H1 (cell line): ENCODE measurements at regions of chr15 and their contacts with region 1.

Region 1: DNA sequence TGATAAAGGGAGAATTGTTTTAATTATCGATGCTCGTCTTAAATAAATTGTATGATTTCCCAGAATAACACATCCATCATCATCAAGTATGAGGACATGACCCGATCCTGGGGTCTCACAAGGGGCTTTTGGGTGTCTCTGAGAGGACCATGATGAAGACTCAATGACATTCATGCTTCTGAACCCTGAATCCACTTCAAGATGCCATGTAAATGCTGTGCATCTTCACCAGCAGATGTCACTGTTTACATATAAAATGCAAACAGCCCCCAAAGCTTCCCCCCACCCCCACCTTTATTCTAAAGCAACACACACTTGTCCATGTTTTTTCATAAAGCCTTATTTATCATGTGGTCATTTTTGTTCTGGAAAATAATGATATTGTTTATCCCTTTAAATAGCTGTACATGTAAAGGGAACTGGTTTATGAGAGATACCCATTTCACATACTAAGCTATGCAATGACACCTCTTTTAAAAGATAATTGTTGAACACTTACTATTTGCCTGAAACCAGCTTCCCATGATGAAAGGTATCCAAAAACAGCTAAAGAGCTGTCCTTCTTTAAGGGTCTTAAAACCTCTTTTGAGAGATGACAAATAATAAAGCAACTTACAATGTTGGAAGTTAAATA is 69.7 kb upstream of the UBE3A start:
- DNase-seq: no peak
- H3K4me3 ChIP-seq: no peak overlapping the region
- H3K27ac ChIP-seq: no peak overlapping the region
- H3K4me1 ChIP-seq: peaks cover 0 to 15% (median 11%) of the 10 kb centered on the region in 4 experiments
- H3K27me3 ChIP-seq: no peaks in the 10 kb centered on the region
- CTCF ChIP-seq: peak in 2 of 3 experiments; percentile 61 to 76; a peak in 3 of 4 replicates
- EP300 ChIP-seq: no peak
- POLR2A ChIP-seq: no peak
- RAD21 ChIP-seq: peak; percentile 96 to 98

Region 2: DNA sequence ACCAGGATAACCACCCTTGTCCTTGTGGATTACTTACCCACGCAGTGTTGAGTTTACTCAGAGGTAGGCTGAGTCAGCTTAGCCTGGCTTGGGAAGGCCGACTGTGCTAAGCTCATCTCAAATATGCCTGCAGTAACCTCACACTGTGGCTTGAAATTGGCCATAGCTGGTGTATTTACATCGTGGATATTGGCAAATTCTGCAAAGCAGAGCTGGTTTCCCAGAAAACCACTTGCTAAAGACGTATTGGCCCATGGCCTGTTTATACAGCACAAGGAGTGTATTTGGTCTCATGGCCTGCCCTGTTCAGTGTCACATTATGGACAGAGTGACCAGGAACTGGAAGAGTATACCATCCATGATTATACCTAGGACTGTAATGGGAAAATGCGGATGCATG is 100.9 kb after region 1 on chr15:
- CTCF ChIA-PET with region 1: interaction called, 16 read pairs
- POLR2A ChIA-PET with region 1: no interaction called
- DNase-seq: no peak
- H3K4me3 ChIP-seq: no peak overlapping the region
- H3K27ac ChIP-seq: no peak overlapping the region
- H3K4me1 ChIP-seq: no peaks in the 10 kb centered on the region; a peak in 1 of 7 replicates
- H3K27me3 ChIP-seq: no peaks in the 10 kb centered on the region
- CTCF ChIP-seq: no peak
- EP300 ChIP-seq: no peak
- POLR2A ChIP-seq: no peak
- RAD21 ChIP-seq: no peak

Region 3: DNA sequence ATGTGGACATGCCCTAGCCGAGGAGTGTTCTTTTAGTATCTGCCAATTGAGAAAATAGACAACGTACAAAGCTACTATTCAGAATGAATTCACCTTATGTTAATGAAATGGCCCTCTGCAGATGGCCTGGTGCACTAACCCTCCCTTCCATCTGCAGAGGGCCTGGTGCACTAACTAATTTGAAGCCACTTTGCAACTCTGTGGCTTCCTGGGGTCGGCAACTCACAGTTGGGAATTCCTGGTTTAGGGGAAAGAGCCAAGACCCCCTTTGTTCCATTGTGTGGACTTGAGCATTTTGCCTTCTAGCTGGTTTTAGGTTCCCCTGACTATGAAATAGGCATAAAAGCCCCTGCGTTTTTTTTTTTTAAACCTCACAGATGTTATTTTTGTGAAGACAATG is 134.6 kb after region 1 on chr15:
- CTCF ChIA-PET with region 1: interaction called, 12 read pairs
- POLR2A ChIA-PET with region 1: no interaction called
- DNase-seq: peak in 1 of 2 experiments; percentile 17
- H3K4me3 ChIP-seq: peak overlapping the region in 1 of 4 experiments; percentile 42; a peak in 1 of 8 replicates
- H3K27ac ChIP-seq: no peak overlapping the region
- H3K4me1 ChIP-seq: peaks cover 0 to 18% (median 6%) of the 10 kb centered on the region in 4 experiments
- H3K27me3 ChIP-seq: peaks cover 35 to 76% (median 64%) of the 10 kb centered on the region in 4 experiments
- CTCF ChIP-seq: no peak
- EP300 ChIP-seq: peak in 1 of 2 experiments; percentile 90; a peak in 1 of 3 replicates
- POLR2A ChIP-seq: no peak
- RAD21 ChIP-seq: peak in 1 of 2 experiments; percentile 22; a peak in 1 of 4 replicates

Region 4: GRCh38 chr15:25684521-25685431 is 176.3 kb after region 1 on chr15:
- CTCF ChIA-PET with region 1: interaction called, 119 read pairs
- POLR2A ChIA-PET with region 1: no interaction called
- DNase-seq: no peak
- H3K4me3 ChIP-seq: no peak overlapping the region
- H3K27ac ChIP-seq: no peak overlapping the region
- H3K4me1 ChIP-seq: peaks cover 0 to 7% (median 0%) of the 10 kb centered on the region in 4 experiments; a peak in 3 of 7 replicates
- H3K27me3 ChIP-seq: no peaks in the 10 kb centered on the region
- CTCF ChIP-seq: peak in 1 of 3 experiments; percentile 6; a peak in 1 of 4 replicates
- EP300 ChIP-seq: no peak
- POLR2A ChIP-seq: no peak
- RAD21 ChIP-seq: no peak

Region 5: GRCh38 chr15:25693321-25694237 is 185.1 kb after region 1 on chr15:
- CTCF ChIA-PET with region 1: interaction called, 119 read pairs
- POLR2A ChIA-PET with region 1: interaction called, 4 read pairs
- DNase-seq: peak in 1 of 2 experiments; percentile 86
- H3K4me3 ChIP-seq: no peak overlapping the region
- H3K27ac ChIP-seq: no peak overlapping the region
- H3K4me1 ChIP-seq: peaks cover 0 to 14% (median 5%) of the 10 kb centered on the region in 4 experiments; a peak in 6 of 7 replicates
- H3K27me3 ChIP-seq: no peaks in the 10 kb centered on the region
- CTCF ChIP-seq: peak; percentile 70 to 92 (median 85)
- EP300 ChIP-seq: no peak
- POLR2A ChIP-seq: no peak
- RAD21 ChIP-seq: peak; percentile 66 to 68

Region 6: GRCh38 chr15:25710184-25710583 is 201.7 kb after region 1 on chr15:
- CTCF ChIA-PET with region 1: interaction called, 11 read pairs
- POLR2A ChIA-PET with region 1: no interaction called
- DNase-seq: peak; percentile 34 to 89
- H3K4me3 ChIP-seq: no peak overlapping the region
- H3K27ac ChIP-seq: no peak overlapping the region
- H3K4me1 ChIP-seq: peaks cover 0 to 2% (median 0%) of the 10 kb centered on the region in 4 experiments; a peak in 1 of 7 replicates
- H3K27me3 ChIP-seq: no peaks in the 10 kb centered on the region
- CTCF ChIP-seq: peak; percentile 76 to 97 (median 89)
- EP300 ChIP-seq: no peak
- POLR2A ChIP-seq: no peak
- RAD21 ChIP-seq: peak; percentile 62 to 69